H1 (cell line): ENCODE measurements at regions of chr5 and their contacts with region 1.

Region 1: DNA sequence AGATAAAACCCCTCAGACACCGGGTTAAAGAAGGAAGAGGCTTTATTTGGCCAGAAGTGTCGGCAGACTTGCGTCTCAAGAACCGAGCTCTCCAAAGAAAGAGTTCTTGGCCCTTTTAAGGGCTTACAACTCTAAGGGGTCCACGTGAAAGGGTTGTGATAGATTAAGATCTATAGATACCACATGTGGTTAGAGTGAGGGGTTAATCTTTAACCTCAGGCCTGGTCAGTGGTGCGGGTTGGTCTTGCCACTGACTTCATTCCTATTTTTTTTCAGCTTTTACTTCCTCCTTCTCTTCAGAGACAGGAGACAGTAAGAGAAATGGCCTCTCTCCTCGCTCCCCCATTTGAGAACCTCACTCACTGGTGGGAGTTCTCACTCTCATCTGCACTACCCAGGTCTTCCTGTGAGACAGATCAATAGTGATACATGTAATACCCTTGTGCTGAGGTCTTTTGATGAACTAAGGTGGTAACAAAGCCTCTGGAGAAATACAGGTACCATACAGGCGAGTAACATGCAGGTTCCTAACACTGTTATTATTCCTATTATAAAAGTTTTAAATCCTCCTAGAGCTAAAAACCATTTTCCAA is 52.4 kb upstream of the COX7C start:
- DNase-seq: no peak
- H3K4me3 ChIP-seq: no peak overlapping the region
- H3K27ac ChIP-seq: no peak overlapping the region
- H3K4me1 ChIP-seq: no peaks in the 10 kb centered on the region
- H3K27me3 ChIP-seq: no peaks in the 10 kb centered on the region
- CTCF ChIP-seq: no peak
- EP300 ChIP-seq: no peak
- POLR2A ChIP-seq: no peak
- RAD21 ChIP-seq: no peak

Region 2: GRCh38 chr5:86371061-86371460 is 194.2 kb before region 1 on chr5:
- CTCF ChIA-PET with region 1: no interaction called
- POLR2A ChIA-PET with region 1: no interaction called
- DNase-seq: no peak
- H3K4me3 ChIP-seq: no peak overlapping the region
- H3K27ac ChIP-seq: no peak overlapping the region
- H3K4me1 ChIP-seq: no peaks in the 10 kb centered on the region
- H3K27me3 ChIP-seq: no peaks in the 10 kb centered on the region
- CTCF ChIP-seq: no peak
- EP300 ChIP-seq: no peak
- POLR2A ChIP-seq: no peak
- RAD21 ChIP-seq: no peak

Region 3: DNA sequence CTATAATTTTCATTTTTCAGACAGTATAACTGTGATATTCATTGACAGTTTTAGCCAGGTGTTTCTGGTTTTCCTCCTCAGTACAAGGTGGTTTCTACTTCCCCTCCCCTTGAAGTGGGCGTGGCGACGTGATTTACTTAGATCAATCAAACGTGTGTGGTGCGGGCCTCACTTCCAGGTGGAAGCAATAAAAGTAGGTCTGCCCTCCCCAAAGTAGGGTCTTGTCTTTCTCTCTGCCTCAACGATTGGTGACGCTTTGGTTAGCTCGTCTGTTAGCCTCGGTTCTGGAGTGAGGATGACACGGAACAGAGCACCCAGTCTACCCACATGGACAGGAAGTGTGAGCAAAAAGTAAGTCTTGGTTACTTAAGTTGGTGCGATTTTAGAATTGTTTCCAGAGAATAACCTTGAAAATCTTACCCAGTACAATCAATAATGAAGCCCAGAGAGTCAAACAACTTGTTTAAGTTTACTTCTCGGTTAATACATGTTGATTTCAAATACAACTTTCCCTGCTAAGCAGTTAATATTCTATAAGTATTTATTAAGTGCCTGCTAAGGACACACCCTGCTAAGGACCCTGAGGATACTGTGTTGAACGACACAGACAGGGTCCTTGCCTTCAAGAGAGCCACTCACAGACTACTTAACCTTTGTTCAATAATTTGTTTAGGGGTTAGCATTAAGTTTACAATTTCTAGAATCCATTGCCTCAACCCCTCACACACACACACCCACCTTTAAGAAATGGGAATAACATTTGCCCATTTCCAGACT is 100.9 kb after region 1 on chr5:
- CTCF ChIA-PET with region 1: interaction called, 13 read pairs
- POLR2A ChIA-PET with region 1: no interaction called
- DNase-seq: no peak
- H3K4me3 ChIP-seq: peak overlapping the region in 1 of 4 experiments; percentile 32; a peak in 1 of 8 replicates
- H3K27ac ChIP-seq: no peak overlapping the region
- H3K4me1 ChIP-seq: no peaks in the 10 kb centered on the region; a peak in 2 of 7 replicates
- H3K27me3 ChIP-seq: no peaks in the 10 kb centered on the region
- CTCF ChIP-seq: no peak
- EP300 ChIP-seq: no peak
- POLR2A ChIP-seq: no peak
- RAD21 ChIP-seq: no peak

Region 4: GRCh38 chr5:86679529-86679928 is 114.2 kb after region 1 on chr5:
- CTCF ChIA-PET with region 1: interaction called, 21 read pairs
- POLR2A ChIA-PET with region 1: no interaction called
- DNase-seq: no peak
- H3K4me3 ChIP-seq: no peak overlapping the region
- H3K27ac ChIP-seq: no peak overlapping the region
- H3K4me1 ChIP-seq: peaks cover 0 to 3% (median 0%) of the 10 kb centered on the region in 4 experiments; a peak in 1 of 7 replicates
- H3K27me3 ChIP-seq: peaks cover 0 to 2% (median 0%) of the 10 kb centered on the region in 4 experiments; a peak in 1 of 7 replicates
- CTCF ChIP-seq: peak in 2 of 3 experiments; percentile 60 to 62; a peak in 3 of 4 replicates
- EP300 ChIP-seq: no peak
- POLR2A ChIP-seq: no peak
- RAD21 ChIP-seq: peak; percentile 91 to 93

Region 5: GRCh38 chr5:86689103-86689729 is 123.9 kb after region 1 on chr5:
- CTCF ChIA-PET with region 1: interaction called, 15 read pairs
- POLR2A ChIA-PET with region 1: no interaction called
- DNase-seq: no peak
- H3K4me3 ChIP-seq: no peak overlapping the region
- H3K27ac ChIP-seq: no peak overlapping the region
- H3K4me1 ChIP-seq: no peaks in the 10 kb centered on the region
- H3K27me3 ChIP-seq: no peaks in the 10 kb centered on the region
- CTCF ChIP-seq: no peak
- EP300 ChIP-seq: no peak
- POLR2A ChIP-seq: no peak
- RAD21 ChIP-seq: no peak